PC-3 (cell line): ENCODE measurements at regions of chr9 and their contacts with region 1.

Region 1: GRCh38 chr9:2469681-2470221 is 151.8 kb upstream of the VLDLR start:
- DNase-seq: peak; percentile 41
- ATAC-seq: peak; percentile 63
- H3K4me3 ChIP-seq: no peak overlapping the region
- H3K27ac ChIP-seq: no peak overlapping the region
- H3K4me1 ChIP-seq: peaks cover 13% of the 10 kb centered on the region
- H3K27me3 ChIP-seq: peaks cover 21% of the 10 kb centered on the region
- CTCF ChIP-seq: peak; percentile 40; the same call in 1 of the 2 replicates

Region 2: GRCh38 chr9:2132484-2133082 is 337.2 kb before region 1 on chr9:
- CTCF ChIA-PET with region 1: no interaction called
- POLR2A ChIA-PET with region 1: no interaction called
- intact Hi-C with region 1: loop called (anchors 10 kb)
- DNase-seq: peak; percentile 51
- ATAC-seq: 0 out of 2 replicates have a peak, but pooled peaks have one; percentile 15
- H3K4me3 ChIP-seq: no peak overlapping the region
- H3K27ac ChIP-seq: no peak overlapping the region
- H3K4me1 ChIP-seq: no peaks in the 10 kb centered on the region
- H3K27me3 ChIP-seq: no peaks in the 10 kb centered on the region
- CTCF ChIP-seq: peak; percentile 66

Region 3: DNA sequence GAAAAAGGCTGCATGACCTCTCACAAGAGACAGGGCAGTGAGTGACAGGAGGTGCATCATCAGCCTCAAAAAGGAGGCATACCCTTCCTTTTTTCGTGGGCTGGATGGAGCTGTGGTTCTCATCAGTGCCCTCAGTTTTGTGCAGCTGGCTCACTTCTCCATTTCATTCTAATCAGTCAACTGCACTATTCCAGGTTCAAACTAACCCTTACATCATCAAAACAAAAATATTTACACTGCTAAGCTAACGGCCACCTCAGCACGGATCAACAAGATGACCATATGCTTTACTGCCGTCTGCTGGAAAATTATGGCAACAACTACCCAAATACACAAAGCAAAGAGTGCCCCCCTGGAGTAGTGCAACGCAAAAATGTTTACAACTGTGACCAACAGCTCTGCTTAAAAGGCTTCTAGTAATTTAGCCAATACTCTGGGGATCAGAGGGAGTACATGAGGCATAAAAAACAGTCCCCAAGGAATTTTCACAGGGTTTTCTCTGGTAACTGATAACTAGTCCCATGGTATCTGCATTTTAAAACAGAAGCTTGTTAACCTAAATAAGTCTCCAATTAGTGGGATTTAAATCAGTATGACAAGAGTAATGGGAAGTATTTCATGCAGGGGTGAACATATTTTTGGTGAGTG is 258.3 kb after region 1 on chr9:
- CTCF ChIA-PET with region 1: no interaction called
- POLR2A ChIA-PET with region 1: no interaction called
- intact Hi-C with region 1: loop called (anchors 10 kb)
- DNase-seq: peak; percentile 69
- ATAC-seq: peak; percentile 78
- H3K4me3 ChIP-seq: no peak overlapping the region
- H3K27ac ChIP-seq: no peak overlapping the region
- H3K4me1 ChIP-seq: no peaks in the 10 kb centered on the region; the same call in 1 of the 2 replicates
- H3K27me3 ChIP-seq: no peaks in the 10 kb centered on the region
- CTCF ChIP-seq: peak; percentile 87

Region 4: GRCh38 chr9:2837915-2838314 is 368.2 kb after region 1 on chr9:
- CTCF ChIA-PET with region 1: no interaction called
- POLR2A ChIA-PET with region 1: no interaction called
- intact Hi-C with region 1: loop called (anchors 10 kb)
- DNase-seq: no peak
- ATAC-seq: no peak
- H3K4me3 ChIP-seq: no peak overlapping the region
- H3K27ac ChIP-seq: no peak overlapping the region
- H3K4me1 ChIP-seq: peaks cover 12% of the 10 kb centered on the region
- H3K27me3 ChIP-seq: no peaks in the 10 kb centered on the region
- CTCF ChIP-seq: peak; percentile 25; the same call in 1 of the 2 replicates